Left ventricle myocardium superior (tissue), 1 donor: ENCODE measurements at regions of chr6 and their contacts with region 1.

Region 1: GRCh38 chr6:138115877-138116660 is 8.8 kb upstream of the PERP start:
- DNase-seq: peak; percentile 63
- ATAC-seq: peak; percentile 79

Region 2: DNA sequence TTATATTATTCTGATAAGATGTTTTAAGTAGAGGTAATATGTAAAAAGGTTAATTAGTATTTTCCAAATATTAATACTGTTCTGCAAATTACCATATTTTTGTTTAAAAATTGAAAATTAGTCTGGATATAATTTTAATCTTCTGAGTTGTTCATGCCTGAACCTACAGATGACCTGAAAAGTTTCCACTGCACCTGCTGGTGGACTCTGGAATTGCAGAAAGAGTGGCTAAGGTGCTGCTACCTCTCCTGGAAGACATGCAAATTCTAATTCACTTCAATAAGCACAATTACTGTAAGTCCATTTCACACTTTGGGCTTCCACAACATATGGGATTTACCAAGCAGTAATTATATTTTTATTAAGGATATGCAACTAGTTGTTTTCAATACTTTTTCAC is 544.2 kb before region 1 on chr6:
- intact Hi-C with region 1: no loop called
- DNase-seq: no peak
- ATAC-seq: no peak

Region 3: DNA sequence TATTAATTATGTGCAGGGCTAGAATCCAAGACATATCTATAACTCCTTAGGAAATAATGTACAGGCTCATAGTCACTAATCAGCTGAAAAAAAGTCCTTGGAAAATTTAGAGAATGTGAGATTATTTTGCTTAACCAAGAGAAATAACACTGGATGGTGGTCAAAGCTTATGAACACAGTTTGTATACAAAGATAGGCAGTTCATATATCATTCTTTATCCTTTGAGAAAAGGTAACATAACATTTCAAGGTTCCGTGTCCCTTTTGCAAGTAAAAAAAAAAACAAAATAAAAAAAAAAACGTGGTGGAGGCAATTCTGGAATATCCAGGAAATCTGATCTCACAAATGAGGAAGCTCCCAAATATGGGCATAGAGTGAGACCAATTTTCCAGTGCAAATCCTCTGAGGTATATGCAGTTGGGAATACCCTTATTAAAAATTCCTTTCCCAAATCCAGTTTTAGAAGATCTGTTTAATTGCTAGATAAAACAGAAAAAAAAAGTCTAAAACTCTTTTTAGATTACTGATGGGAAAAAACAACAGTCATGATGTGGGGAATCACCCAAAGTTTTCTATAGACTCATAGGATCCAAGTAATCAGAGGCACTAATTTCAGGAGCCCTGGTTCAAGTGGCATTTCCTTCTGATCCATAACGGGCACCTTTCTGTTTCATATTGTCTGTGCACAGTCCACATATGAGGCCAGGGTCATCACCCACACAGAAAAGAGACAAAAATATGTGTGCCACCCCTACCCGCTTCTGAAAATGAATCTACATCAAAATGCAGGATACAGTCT is 266.7 kb before region 1 on chr6:
- intact Hi-C with region 1: no loop called
- DNase-seq: no peak
- ATAC-seq: no peak

Region 4: DNA sequence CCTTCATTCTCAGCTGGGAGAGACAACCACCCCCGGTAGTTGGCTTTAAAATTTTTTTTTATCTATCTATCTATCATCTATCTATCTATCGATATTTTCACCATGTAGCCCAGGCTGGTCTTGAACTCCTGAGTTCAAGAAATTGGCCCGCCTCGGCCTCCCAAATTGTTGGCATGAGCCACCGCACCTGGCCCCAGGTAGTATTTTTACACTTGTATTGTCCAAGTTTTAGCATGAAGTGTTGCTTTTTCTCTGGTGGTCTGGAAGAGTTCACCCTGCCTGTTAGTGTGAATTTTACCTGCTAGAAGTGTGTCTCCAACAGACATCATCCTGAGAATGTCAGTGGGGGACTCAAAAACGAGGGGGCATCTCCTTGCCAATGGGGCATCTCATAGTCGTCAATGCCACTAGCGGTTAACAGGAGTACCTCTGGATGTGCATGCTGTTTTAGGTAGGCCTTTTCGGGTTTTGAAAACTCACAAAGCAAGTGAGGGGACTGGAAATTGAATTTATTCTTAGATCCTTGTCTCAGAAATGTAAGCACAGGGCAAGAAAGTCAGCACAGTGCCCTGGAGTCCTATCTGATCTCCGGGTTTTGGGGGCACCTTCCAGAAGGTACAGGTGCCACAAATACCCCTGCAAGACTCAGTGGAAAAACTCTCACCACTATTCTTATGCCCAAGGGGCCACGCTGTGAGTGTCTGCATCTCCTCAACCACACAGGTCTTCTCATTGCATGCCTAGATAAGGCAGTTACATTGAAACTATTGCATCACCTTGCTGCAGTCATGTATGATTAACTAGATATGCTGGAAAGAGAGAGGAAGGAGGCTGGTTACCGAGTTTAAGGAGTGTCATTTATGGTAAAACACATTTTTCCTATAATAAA is 211.9 kb before region 1 on chr6:
- intact Hi-C with region 1: no loop called
- DNase-seq: no peak
- ATAC-seq: no peak

Region 5: DNA sequence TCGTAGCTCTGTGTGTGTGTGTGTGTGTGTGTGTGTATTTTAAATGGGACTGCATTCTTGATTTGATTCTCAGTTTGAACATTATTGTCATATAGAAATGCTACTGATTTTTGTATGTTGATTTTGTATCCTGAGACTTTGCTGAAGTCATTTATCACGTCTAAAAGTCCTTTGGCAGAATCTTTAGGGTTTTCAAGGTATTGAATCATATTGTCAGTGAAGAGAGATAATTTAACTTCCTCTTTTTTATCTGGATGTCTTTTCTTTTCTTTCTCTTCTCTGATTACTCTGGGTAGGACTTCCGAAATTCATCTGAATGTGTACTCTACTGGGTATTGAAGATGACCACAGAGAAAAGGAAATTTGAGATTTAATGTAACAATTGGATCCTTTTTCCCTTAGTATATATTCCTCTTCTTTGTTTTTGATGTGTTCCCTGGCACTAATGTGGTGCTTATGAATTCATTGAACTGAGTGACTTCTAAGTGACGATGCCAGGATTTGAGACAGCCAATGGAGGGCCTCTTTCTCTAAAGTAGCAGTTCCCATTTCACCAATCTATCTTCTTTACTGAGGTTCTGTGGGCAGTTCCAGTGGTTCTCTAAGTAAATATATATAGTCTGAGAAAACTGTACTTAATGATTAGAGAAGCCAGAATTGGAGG is 201.4 kb before region 1 on chr6:
- intact Hi-C with region 1: no loop called
- DNase-seq: no peak
- ATAC-seq: no peak

Region 6: DNA sequence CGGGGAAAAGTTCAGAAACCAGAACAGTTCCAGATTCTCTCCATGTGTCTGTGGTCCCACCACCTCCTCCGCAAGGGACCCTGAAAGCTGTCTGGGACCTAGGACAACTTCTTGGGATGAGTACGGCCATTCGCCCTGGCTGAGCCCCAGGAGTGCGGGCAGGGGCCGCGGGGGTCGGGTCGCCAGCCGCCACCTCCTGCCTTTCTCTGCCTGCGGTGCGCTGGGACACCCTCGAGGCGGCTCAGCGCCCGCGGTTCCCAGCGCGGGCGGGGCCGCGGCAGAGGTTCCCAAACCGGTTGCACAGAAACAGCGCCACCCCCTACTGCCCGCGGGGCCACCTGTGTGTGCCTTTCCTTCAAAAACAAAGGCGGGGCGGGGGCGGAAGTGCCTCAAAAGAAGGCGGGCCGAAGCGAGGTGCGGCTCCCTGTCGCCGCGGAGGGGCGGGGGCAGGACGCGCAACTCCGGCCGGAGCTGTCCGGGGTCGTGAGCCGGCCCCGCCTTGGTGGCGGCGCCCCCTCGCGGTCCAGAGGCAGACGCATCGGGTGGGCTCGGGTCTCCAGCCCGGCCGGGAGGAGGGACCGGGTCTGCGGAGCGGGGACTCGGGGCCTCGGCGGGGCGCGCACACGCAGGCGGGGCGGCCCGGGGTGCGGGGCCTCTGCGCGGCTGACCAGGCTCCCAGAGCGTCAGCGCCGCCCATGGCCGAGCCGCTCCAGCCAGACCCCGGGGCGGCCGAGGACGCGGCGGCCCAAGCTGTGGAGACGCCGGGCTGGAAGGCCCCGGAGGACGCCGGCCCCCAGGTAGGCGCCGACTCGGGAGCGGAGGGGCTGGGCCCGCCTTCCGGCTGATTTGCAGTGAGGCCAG is 288.0 kb after region 1 on chr6 and contains the start of gene HEBP2:
- intact Hi-C with region 1: loop called (anchors 10 kb)
- DNase-seq: peak; percentile 97
- ATAC-seq: peak; percentile 95
- total RNA-seq, gene HEBP2: 104 TPM

Region 7: GRCh38 chr6:138509371-138509770 is 393.3 kb after region 1 on chr6:
- intact Hi-C with region 1: loop called (anchors 5 kb)
- DNase-seq: no peak
- ATAC-seq: peak; percentile 78

Region 8: DNA sequence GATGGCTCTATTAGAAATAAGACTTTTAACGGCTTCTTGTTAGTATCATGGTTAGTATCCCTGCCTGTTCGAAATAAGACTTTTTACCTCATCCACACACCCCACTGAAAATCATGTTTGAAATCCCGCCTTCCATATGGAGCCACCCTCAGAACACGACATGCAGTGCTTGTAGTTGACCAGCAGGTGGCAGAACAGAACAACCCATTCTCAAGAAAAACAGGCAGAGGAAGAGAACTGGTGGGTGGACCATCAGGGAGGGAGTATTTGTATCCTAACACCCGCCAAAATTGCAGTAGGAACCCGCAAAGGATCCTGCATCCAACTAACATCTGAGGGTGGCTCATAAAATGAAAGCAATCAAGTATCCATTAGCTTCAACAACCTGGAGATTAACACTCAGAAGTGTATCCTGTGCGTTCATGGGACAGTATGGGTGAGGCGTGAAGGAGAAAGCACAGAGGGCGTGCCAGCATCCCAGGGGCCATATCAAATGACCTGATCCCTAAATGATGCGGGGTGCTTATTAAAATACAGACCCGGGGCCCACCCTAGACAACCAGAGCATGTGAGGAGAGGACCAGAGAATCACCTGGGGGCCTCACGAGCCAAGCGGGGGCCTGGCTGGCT is 472.9 kb after region 1 on chr6:
- intact Hi-C with region 1: loop called (anchors 10 kb)
- DNase-seq: peak; percentile 45
- ATAC-seq: peak; percentile 67

Region 9: GRCh38 chr6:138765896-138766655 is 650.0 kb after region 1 on chr6:
- intact Hi-C with region 1: loop called (anchors 5 kb)
- DNase-seq: no peak
- ATAC-seq: no peak